ENCODE measurements at regions of chr6 and their contacts with region 1.

Region 1: DNA sequence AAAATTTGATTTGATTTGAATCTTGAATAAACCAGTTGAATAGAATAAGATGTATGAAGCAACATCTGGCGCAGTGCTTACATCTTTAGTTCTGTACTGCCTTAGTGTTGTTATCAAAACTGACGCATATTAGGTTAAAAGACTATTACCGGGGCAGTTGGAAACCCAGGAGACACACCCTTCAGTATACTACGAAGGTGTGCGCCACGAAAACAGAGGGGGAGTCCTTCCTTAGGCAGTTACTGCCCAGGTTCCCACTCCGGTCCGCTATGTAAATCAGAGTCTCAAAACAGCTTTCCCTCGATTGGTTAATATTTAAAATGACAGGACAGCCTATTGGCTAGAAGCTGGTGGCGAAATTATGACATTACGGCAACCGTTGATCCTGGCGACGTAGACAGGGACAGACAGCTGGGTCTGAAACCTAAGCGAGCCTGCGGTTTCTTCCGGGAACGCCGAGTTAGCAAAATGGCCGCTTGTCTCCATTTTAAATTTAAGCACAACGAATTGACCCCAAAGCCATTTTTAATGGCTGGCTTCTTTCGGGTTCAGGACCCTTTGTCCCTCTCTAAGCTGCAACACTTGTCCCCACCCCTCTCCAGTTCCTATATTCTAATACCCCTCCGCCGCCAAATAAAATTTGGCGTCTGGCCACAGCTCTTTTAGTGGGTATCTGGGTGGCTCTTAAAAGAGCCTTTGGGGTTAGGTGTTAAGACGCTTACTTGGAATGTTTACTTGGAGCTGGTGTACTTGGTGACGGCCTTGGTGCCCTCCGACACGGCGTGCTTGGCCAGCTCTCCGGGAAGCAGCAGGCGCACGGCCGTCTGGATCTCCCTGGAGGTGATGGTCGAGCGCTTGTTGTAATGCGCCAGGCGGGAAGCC is 35.8 kb downstream of the HFE start:
- DNase-seq: peak; percentile 99
- H3K4me3 ChIP-seq: peak overlapping the region; percentile 72
- H3K27ac ChIP-seq: peak overlapping the region; percentile 99
- H3K4me1 ChIP-seq: peaks cover 60% of the 10 kb centered on the region
- CTCF ChIP-seq: no peak

Region 2: DNA sequence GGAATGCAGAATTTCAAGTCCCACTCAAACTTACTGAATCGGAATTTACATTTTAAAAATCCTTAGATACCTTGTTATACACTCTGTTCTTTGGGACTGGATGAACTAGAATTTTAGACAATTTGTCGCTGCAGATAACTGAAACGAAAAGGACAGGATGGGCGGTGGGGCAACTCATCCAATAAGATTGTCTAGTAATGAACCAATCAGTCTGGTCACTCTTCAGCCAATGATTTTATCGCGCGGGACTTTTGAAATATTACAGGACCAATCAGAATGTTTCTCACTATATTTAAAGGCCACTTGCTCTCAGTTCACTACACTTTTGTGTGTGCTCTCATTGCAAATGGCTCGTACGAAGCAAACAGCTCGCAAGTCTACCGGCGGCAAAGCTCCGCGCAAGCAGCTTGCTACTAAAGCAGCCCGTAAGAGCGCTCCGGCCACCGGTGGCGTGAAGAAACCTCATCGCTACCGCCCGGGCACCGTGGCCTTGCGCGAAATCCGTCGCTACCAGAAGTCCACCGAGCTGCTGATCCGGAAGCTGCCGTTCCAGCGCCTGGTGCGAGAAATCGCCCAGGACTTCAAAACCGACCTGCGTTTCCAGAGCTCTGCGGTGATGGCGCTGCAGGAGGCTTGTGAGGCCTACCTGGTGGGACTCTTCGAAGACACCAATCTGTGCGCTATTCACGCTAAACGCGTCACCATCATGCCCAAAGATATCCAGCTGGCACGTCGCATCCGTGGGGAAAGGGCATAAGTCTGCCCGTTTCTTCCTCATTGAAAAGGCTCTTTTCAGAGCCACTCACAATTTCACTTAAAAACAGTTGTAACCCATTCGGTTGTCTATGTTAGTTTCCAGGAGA is 77.7 kb before region 1 on chr6:
- CTCF ChIA-PET with region 1: no interaction called
- POLR2A ChIA-PET with region 1: interaction called, 56 read pairs
- intact Hi-C with region 1: no loop called
- DNase-seq: peak; percentile 97
- H3K4me3 ChIP-seq: peak overlapping the region; percentile 67
- H3K27ac ChIP-seq: peak overlapping the region; percentile 99
- H3K4me1 ChIP-seq: peaks cover 66% of the 10 kb centered on the region
- CTCF ChIP-seq: peak; percentile 54

Region 3: DNA sequence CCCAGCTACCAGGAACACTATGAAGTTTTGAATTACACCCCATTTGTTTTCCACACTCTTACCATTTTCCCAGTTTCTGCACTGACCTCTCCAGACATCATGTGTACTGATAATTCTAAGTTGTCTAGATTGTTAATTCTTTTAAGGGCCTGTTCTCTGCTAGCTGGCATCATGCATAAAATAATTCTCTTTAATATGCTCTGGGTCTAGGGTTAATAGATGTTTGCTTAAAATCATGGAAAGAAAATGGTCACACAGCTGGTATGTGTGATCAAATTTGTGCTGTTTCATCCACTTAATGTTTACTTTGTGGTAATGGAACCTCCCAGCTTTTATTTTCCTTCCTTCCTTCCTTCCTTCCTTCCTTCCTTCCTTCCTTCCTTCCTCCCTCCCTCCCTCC is 13.3 kb after region 1 on chr6:
- CTCF ChIA-PET with region 1: no interaction called
- POLR2A ChIA-PET with region 1: interaction called, 16 read pairs
- intact Hi-C with region 1: no loop called
- DNase-seq: no peak
- H3K4me3 ChIP-seq: no peak overlapping the region
- H3K27ac ChIP-seq: no peak overlapping the region
- H3K4me1 ChIP-seq: peaks cover 9% of the 10 kb centered on the region
- CTCF ChIP-seq: no peak

Region 4: DNA sequence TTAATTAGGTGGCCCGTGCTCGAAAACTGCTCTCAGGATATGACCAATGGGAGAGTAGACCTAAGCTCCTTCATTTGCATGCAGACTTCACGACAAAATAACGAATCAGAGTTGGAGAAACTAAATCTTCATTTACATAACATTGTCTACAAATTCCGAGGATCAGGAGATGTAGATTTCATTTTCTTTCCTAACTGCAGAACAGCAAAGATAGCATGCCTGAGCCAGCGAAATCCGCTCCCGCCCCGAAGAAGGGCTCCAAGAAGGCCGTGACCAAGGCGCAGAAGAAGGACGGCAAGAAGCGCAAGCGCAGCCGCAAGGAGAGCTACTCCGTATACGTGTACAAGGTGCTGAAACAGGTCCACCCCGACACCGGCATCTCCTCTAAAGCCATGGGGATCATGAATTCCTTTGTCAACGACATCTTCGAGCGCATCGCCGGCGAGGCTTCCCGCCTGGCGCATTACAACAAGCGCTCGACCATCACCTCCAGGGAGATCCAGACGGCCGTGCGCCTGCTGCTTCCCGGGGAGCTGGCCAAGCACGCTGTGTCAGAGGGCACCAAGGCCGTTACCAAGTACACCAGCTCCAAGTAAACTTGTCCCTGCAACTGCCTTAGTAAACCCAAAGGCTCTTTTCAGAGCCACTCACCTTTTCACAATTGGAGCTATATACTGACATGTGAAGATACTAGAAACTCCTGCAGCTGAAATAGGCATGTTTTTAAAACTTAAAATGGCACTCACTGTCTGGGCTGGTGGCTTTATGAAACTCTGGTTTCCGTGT is 60.7 kb after region 1 on chr6:
- CTCF ChIA-PET with region 1: no interaction called
- POLR2A ChIA-PET with region 1: interaction called, 29 read pairs
- intact Hi-C with region 1: no loop called
- DNase-seq: no peak
- H3K4me3 ChIP-seq: no peak overlapping the region
- H3K27ac ChIP-seq: no peak overlapping the region
- H3K4me1 ChIP-seq: peaks cover 22% of the 10 kb centered on the region
- CTCF ChIP-seq: no peak

Region 5: GRCh38 chr6:26285143-26286134 is 162.4 kb after region 1 on chr6:
- CTCF ChIA-PET with region 1: no interaction called
- POLR2A ChIA-PET with region 1: interaction called, 11 read pairs
- intact Hi-C with region 1: no loop called
- DNase-seq: peak; percentile 99
- H3K4me3 ChIP-seq: peak overlapping the region; percentile 80
- H3K27ac ChIP-seq: peak overlapping the region; percentile 96
- H3K4me1 ChIP-seq: peaks cover 32% of the 10 kb centered on the region
- CTCF ChIP-seq: 0 out of 2 replicates have a peak, but pooled peaks have one; percentile 0

Region 6: GRCh38 chr6:26596579-26597388 is 473.8 kb after region 1 on chr6 and contains the start of gene ABT1:
- CTCF ChIA-PET with region 1: no interaction called
- POLR2A ChIA-PET with region 1: no interaction called
- intact Hi-C with region 1: no loop called
- DNase-seq: peak; percentile 97
- H3K4me3 ChIP-seq: peak within 1 kb of the TSS; percentile 91
- H3K27ac ChIP-seq: peak within 1 kb of the TSS; percentile 60
- H3K4me1 ChIP-seq: peaks cover 30% of the 10 kb centered on the region
- CTCF ChIP-seq: no peak
- total RNA-seq, gene ABT1: 32.2 and 34.6 TPM in 2 replicates

Region 7: DNA sequence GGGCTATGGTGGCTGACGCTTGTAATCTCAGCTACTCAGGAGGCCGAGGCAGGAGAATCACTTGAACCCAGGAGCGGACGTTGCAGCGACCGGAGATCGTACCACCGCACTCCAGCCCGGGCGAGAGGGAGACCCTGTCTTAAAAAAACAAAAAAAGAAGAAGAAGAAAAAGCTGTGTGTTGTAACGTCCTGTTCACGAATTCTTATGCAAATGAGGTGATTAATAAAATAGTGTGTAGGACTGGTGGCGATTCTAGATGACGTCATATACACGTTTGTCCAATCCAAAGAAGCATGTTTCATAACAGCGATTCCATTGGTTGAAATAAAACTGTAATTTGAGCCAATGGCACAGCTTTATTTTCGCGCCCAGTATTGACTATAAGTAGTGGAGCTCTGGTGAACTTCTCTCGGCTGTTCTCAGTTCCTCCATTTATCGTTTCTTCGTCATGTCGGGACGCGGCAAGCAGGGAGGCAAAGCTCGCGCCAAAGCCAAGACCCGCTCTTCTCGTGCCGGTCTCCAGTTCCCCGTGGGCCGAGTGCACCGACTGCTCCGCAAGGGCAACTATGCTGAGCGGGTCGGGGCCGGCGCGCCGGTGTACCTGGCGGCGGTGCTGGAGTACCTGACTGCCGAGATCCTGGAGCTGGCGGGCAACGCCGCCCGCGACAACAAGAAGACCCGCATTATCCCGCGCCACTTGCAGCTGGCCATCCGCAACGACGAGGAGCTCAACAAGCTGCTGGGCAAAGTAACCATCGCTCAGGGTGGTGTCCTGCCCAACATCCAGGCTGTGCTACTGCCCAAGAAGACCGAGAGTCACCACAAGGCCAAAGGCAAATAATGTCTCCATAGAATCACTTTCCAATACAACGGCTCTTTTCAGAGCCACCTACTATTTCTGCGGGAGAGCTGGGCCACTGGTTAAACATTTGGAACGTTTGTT is 1742.1 kb after region 1 on chr6:
- CTCF ChIA-PET with region 1: no interaction called
- POLR2A ChIA-PET with region 1: interaction called, 17 read pairs
- intact Hi-C with region 1: loop called (anchors 2 kb)
- DNase-seq: peak; percentile 99
- H3K4me3 ChIP-seq: peak overlapping the region; percentile 67
- H3K27ac ChIP-seq: peak overlapping the region; percentile 99
- H3K4me1 ChIP-seq: peaks cover 60% of the 10 kb centered on the region
- CTCF ChIP-seq: no peak

Measured in OCI-LY7 (cell line).